GM13977 (cell line): ENCODE measurements at regions of chr16 and their contacts with region 1.

Region 1: DNA sequence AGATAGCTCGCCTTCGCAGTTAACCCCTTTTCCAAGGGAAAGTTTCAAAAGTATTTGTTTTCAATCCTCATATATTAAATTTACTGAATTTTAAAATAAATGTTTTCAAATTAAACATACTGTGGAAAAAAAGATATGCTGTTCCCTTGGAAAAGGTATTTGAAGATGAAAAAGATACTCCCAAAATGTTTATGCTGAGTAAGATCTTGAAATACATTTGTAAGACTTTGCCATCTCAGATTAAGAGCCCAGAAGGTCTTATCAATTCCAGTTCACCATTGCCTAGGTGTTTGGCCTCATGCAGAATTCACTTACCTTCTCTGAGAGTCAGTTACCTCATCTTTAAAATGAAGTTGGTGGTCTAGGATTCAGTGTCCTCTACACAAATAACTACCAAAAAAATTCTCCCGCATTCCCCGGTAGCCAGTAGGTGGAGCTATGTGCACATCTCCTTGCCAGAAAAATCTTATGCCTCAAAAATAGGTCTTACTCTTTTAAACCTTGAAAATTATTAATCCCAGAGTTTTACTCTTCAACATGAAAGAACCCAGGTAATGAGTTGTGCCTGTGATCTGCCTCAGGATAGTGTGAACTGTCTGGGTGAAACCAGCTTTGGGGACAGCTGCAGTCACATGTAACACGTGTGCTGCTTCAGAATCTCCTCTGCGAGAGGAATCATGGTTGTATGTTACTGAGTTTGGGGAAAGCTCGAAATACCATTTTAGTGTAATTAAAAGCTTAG is 178.3 kb downstream of the MRTFB start:
- DNase-seq: peak; percentile 52
- CTCF ChIP-seq: peak; percentile 76

Region 2: DNA sequence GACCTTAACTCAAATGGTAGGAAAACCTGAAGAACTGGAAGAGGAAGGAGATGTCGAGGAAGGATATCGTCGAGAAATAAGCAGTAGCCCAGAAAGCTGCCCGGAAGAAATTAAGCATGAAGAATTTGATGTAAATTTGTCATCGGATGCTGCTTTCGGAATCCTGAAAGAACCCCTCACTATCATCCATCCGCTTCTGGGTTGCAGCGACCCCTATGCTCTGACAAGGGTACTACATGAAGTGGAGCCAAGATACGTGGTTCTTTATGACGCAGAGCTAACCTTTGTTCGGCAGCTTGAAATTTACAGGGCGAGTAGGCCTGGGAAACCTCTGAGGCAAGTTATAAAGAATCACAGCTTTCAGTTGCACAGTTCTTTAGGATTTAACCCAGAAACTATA is 314.1 kb before region 1 on chr16:
- in situ Hi-C with region 1: loop called (anchors 25 kb)
- DNase-seq: no peak
- CTCF ChIP-seq: peak; percentile 10

Region 3: GRCh38 chr16:14146445-14146844 is 103.0 kb before region 1 on chr16:
- in situ Hi-C with region 1: no loop called
- DNase-seq: no peak
- CTCF ChIP-seq: no peak